Esophagus muscularis mucosa (tissue), 4 donors: ENCODE measurements at regions of chr3 and their contacts with region 1.

Region 1: DNA sequence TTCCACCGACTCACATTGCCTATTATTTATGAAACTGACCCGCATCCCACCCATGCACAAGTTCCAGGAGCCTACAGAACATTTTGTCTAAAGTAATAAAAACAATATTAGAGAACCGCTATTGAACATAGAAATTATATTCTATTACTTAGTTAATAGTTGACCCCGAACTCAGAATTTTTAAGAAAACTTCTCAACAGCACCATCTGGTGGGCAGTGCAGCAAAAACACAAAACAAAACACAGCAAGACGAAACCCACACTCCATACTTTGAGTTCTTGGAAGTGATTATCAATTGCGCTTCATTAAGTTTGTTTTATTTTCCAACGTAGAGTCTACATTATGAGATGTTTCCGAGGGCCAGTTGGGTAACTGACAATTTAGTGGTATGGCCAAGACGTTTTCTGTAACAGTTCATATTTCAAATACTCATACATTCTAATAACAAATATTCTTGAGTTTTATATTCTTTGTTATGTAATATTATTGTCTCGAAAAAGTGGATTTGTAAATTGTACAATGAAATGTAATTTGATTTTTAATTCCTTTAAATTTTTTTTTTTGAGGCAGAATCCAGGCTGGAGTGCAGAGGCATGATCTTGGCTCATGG is 24.0 kb upstream of the C3orf70 start:
- DNase-seq: no peak
- H3K4me3 ChIP-seq: no peak overlapping the region
- H3K27ac ChIP-seq: no peak overlapping the region
- H3K4me1 ChIP-seq: peaks cover 0 to 6% (median 1%) of the 10 kb centered on the region in 4 donors
- H3K27me3 ChIP-seq: no peaks in the 10 kb centered on the region
- CTCF ChIP-seq: peak; percentile 71 to 78 (median 71)
- EP300 ChIP-seq: no peak
- POLR2A ChIP-seq: no peak

Region 2: DNA sequence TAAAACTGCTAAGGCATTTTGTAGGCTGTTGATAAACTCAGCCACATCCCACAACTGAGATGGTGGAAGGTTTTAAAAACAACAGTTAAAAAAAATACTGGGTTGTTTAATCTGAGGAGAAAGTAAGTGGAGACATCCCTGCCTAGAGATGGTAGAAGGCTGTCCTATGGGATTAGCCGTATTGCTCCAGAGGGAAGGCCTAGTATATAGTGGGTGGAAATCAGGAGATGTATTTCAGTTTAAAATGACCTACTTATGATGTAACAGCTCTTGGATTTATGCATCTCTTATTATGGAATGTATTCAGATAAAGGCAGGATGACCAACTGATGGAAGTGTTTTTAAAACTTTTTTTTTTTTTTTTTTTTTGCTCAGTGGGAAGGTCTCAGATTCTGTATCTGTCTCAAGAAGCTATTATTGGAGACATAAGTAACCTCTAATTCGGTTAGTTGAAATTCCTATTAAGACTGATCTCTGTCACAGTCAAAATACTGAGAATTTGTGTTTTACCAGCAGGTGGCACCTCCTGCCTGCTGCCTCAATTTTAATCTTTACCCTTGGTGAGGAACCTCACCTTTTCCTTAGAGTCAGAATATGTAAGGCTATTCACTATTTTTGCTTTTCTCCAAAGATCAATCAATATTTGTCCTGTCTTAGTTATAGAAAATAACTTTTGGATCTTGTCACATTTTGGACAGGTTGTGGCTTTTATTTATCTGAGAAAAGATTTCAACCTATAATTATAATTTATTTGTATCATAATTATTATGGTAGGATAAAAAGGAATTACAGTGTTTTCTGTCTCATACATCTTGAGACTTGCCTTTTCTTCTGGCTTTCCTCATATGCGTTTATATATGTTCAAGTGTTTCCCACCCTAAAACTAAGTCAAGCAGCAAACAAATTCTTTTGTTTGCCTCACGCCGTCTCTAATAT is 301.9 kb before region 1 on chr3:
- intact Hi-C with region 1: loop called (anchors 5 kb)
- DNase-seq: no peak
- H3K4me3 ChIP-seq: no peak overlapping the region
- H3K27ac ChIP-seq: no peak overlapping the region
- H3K4me1 ChIP-seq: peaks cover 0 to under 1% (median under 1%) of the 10 kb centered on the region in 4 donors
- H3K27me3 ChIP-seq: no peaks in the 10 kb centered on the region
- CTCF ChIP-seq: peak; percentile 36 to 57 (median 44)
- EP300 ChIP-seq: no peak
- POLR2A ChIP-seq: no peak

Region 3: GRCh38 chr3:185084901-185085300 is 92.0 kb before region 1 on chr3:
- intact Hi-C with region 1: loop called (anchors 2 kb)
- DNase-seq: no peak
- H3K4me3 ChIP-seq: no peak overlapping the region
- H3K27ac ChIP-seq: peak overlapping the region in 1 of 4 donors; percentile 2
- H3K4me1 ChIP-seq: peaks cover 0 to 39% (median 32%) of the 10 kb centered on the region in 4 donors
- H3K27me3 ChIP-seq: no peaks in the 10 kb centered on the region
- CTCF ChIP-seq: peak; percentile 40 to 52 (median 43)
- EP300 ChIP-seq: no peak
- POLR2A ChIP-seq: no peak

Region 4: DNA sequence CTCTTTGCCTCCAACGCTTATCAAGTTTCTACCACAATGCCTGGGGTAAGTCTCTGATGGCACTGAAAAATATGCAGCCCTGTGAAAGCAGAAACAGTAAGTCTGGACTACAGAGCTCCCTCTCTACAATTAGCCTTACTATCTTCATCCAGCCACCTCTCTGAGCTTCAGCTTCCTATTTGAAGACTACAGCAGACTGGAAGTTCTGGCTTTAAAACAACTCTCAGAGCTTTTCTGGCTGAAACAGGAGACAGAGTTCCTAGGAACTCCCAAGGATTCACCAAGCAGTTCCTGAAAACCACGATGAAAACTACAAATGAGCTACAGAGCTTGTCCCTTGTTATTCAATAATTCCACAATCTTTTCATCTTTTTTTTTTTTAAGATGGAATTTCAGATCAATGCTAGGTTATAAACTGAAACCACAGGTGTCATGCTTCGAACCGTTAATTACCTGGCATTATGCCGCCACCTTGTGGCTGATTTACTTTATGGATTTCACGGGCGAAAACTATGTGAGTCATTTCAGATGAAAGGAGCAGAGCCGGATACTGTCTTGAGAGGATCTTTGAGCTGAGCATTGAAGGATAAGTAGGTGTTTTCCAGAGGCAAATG is 1363.5 kb after region 1 on chr3:
- intact Hi-C with region 1: no loop called
- DNase-seq: peak; percentile 93
- H3K4me3 ChIP-seq: peak overlapping the region in 3 of 4 donors; percentile 15 to 34 (median 30)
- H3K27ac ChIP-seq: peak overlapping the region in 3 of 4 donors; percentile 19 to 62 (median 49)
- H3K4me1 ChIP-seq: peaks cover 12 to 21% (median 19%) of the 10 kb centered on the region in 4 donors
- H3K27me3 ChIP-seq: no peaks in the 10 kb centered on the region
- CTCF ChIP-seq: peak; percentile 71 to 83 (median 77)
- EP300 ChIP-seq: no peak
- POLR2A ChIP-seq: no peak